Activated CD4-positive, alpha-beta memory T cell treated with anti-CD3 and anti-CD28 coated beads, Interleukin-2, amount 10 ng/mL, durations not matched to agents 7 days and 5 days (primary cell): ENCODE measurements at regions of chr11 and their contacts with region 1.

Region 1: DNA sequence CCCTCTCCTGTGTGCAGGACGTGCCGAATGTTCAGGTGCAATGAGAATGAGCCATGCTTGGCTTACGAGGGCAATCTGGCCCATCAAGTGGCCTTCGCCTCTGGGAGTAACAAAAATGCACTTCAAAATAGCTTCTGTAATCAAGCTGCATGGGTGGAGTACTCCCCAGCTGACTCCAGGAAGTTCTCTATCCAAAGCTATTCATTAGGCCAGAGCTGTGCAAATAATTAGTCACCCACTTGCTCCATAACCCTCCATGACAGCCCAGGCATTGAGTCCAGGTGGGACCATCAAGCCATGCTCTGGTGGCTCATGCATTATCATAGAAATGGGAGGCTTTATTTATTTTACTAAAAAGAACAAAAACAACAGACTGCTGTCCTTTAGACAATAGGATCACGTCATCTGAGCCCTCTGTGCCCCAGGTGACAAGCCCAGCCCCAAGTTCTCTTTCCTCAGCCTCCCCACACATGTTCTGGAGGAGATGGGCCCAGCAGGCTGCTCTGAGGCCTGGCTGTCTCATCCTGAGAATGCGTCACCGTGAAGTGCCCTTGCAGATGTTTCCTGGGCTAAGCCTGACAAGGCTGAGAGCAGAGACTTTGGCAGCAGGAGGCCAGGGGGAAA is 244.7 kb downstream of the ETS1 start:
- DNase-seq: peak; percentile 79
- H3K4me3 Mint-ChIP-seq: peak overlapping the region; percentile 65
- H3K27ac Mint-ChIP-seq: peak overlapping the region; percentile 96
- H3K4me1 Mint-ChIP-seq: peaks cover 79% of the 10 kb centered on the region
- H3K27me3 Mint-ChIP-seq: no peaks in the 10 kb centered on the region

Region 2: DNA sequence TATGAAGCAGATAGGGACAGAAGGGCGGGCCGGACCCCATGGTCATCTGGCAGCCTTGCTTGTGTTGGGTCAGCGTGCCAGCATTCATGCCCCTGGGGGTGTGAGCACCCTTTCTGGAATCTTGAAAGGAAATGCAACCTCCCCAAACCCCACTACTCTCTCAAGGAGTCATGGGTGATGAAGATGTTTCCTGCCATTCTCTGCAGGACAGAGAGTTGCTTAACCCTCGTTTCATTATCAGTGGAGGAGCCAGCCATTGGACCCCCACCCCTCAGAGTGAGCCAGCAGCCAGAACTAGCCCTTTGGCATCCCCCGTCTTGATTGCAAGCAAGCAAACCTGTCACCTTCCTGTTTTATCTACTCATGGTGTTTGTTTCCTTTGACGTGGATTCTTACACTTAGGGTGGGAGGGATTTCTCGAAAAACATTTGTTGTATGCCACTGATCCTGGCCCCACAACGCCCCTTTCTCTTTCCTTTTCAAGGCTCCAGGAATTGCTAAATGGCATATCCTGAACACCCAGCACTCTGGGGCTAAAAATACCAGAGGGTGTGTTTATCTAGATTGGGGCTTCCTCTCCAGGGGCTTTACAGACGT is 13.6 kb before region 1 on chr11:
- CTCF ChIA-PET with region 1: interaction called, 35 read pairs
- POLR2A ChIA-PET with region 1: interaction called, 146 read pairs
- DNase-seq: no peak
- H3K4me3 Mint-ChIP-seq: peak overlapping the region; percentile 21
- H3K27ac Mint-ChIP-seq: peak overlapping the region; percentile 79
- H3K4me1 Mint-ChIP-seq: peaks cover 80% of the 10 kb centered on the region
- H3K27me3 Mint-ChIP-seq: no peaks in the 10 kb centered on the region

Region 3: GRCh38 chr11:128367573-128367972 is 24.9 kb after region 1 on chr11:
- CTCF ChIA-PET with region 1: interaction called, 10 read pairs
- POLR2A ChIA-PET with region 1: interaction called, 8 read pairs
- DNase-seq: peak; percentile 58
- H3K4me3 Mint-ChIP-seq: peak overlapping the region; percentile 54
- H3K27ac Mint-ChIP-seq: peak overlapping the region; percentile 64
- H3K4me1 Mint-ChIP-seq: peaks cover 17% of the 10 kb centered on the region
- H3K27me3 Mint-ChIP-seq: peaks cover 3% of the 10 kb centered on the region